ENCODE measurements at regions of chr3 and their contacts with region 1.

Region 1: GRCh38 chr3:132180337-132180791 is 136.8 kb upstream of the ACP3 start:
- DNase-seq: no peak
- ATAC-seq: peak in 3 of 8 donors; percentile 20 to 30 (median 24)
- H3K4me3 ChIP-seq: no peak overlapping the region
- H3K27ac ChIP-seq: no peak overlapping the region
- H3K4me1 ChIP-seq: no peaks in the 10 kb centered on the region
- H3K27me3 ChIP-seq: peaks cover 0 to 4% (median 0%) of the 10 kb centered on the region in 7 donors
- CTCF ChIP-seq: peak in 7 of 9 donors; percentile 41 to 62 (median 49)

Region 2: DNA sequence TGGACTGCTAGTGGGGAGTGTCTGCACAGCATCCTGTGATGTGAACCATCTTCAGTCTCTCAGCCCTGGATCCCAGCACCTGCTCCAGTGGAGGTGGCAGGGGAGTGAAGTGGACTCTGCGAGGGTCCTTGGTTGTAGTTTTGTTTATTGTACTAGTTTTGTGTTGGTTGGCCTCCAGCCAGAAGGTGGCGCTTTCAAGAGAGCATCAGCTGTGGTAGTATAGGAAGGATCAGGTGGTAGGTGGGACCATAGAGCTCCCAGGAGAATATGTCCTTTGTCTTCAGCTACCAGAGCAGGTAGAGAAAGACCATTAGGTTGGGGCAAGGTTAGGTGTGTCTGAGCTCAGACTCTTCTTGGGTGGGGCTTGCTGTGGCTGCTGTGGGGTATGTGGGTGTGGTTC is 1132.8 kb before region 1 on chr3:
- intact Hi-C with region 1: loop called in 1 of 10 experiments (anchors 10 kb)
- DNase-seq: no peak
- ATAC-seq: no peak
- H3K4me3 ChIP-seq: no peak overlapping the region
- H3K27ac ChIP-seq: no peak overlapping the region
- H3K4me1 ChIP-seq: no peaks in the 10 kb centered on the region
- H3K27me3 ChIP-seq: no peaks in the 10 kb centered on the region
- CTCF ChIP-seq: no peak

Region 3: DNA sequence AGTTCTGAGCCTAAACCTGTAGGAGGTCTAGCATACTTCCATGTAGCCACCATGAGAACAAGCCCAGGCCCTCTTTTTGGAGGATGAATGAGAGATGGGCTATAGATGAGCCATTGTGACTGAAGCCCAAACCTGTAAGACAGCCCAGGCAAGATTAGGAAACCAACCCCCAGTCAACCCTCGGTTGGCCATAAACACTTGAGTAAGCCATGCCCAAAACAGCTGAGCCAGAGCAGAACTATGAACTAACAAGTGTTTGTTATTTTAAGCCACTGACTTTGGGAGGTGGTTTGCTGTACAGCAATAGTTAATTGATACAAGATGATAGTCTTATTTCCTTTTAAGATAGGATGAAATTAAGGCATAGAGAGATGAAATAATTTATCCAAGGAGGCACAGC is 133.2 kb before region 1 on chr3:
- intact Hi-C with region 1: loop called in 2 of 10 experiments (anchors 5 to 10 kb)
- DNase-seq: no peak
- ATAC-seq: no peak
- H3K4me3 ChIP-seq: no peak overlapping the region
- H3K27ac ChIP-seq: no peak overlapping the region
- H3K4me1 ChIP-seq: no peaks in the 10 kb centered on the region
- H3K27me3 ChIP-seq: no peaks in the 10 kb centered on the region
- CTCF ChIP-seq: no peak

Region 4: GRCh38 chr3:132283440-132283839 is 103.1 kb after region 1 on chr3:
- intact Hi-C with region 1: no loop called
- DNase-seq: no peak
- ATAC-seq: peak; percentile 55 to 89 (median 80)
- H3K4me3 ChIP-seq: no peak overlapping the region
- H3K27ac ChIP-seq: peak overlapping the region in 4 of 10 donors; percentile 9 to 88 (median 46)
- H3K4me1 ChIP-seq: peaks cover 0 to 33% (median 0%) of the 10 kb centered on the region in 9 donors
- H3K27me3 ChIP-seq: peaks cover 0 to 5% (median 0%) of the 10 kb centered on the region in 7 donors
- CTCF ChIP-seq: no peak

Measured in heart right ventricle (tissue), 16 donors.